CD14-positive monocyte (primary cell): ENCODE measurements at regions of chr20 and their contacts with region 1.

Region 1: DNA sequence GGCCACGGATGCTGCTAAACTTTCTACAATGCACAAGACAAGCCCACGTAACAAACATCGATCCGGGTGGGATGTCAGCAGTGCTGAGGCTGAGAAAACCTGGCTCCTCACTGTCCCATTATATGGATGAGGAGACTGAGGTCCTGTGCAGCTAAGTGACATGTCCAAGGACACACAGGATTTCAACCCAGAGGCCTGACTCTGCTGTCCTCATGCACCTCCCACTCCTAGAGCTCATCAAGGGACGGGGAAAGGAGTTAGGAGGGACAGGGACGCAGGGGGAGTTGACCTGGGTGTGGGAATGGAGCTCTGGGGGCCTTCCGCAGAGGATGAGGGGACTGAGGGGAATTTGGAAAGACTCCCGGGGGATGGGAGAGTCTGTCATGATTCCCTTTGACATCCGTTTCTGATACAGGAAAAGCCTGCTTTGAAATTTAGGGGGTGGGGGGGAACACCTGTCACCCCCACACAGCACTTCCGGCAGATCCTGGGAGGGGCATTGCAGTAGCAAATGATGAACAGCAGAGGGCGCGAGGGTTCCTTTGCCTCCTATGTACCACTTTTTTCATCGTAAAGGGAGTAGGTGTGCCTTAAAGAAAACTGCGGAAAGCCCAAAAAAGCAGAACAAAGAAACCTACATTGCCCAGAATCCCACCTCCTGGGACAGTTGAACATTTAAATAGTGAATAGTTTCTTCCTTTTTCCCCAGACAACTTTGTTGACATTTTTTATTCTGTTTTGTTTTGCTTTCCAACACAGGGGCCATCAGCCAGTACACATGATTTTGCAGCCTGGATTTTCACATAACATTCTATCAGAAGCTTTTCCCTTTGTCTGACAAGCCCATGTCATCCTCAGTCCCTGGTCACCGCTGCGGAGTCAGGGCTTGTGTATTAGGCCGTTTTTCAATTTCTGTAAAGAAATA is 48.6 kb downstream of the SLC2A10 start:
- DNase-seq: peak; percentile 14 to 47 (median 44)
- H3K4me3 ChIP-seq: no peak overlapping the region
- H3K4me3 Mint-ChIP-seq: no peak overlapping the region
- H3K27ac ChIP-seq: no peak overlapping the region
- H3K27ac Mint-ChIP-seq: no peak overlapping the region
- H3K4me1 ChIP-seq: no peaks in the 10 kb centered on the region
- H3K4me1 Mint-ChIP-seq: peaks cover 3% of the 10 kb centered on the region
- H3K27me3 ChIP-seq: no peaks in the 10 kb centered on the region
- H3K27me3 Mint-ChIP-seq: peaks cover 5 to 10% (median 5%) of the 10 kb centered on the region in 3 donors
- CTCF ChIP-seq: peak; percentile 95

Region 2: DNA sequence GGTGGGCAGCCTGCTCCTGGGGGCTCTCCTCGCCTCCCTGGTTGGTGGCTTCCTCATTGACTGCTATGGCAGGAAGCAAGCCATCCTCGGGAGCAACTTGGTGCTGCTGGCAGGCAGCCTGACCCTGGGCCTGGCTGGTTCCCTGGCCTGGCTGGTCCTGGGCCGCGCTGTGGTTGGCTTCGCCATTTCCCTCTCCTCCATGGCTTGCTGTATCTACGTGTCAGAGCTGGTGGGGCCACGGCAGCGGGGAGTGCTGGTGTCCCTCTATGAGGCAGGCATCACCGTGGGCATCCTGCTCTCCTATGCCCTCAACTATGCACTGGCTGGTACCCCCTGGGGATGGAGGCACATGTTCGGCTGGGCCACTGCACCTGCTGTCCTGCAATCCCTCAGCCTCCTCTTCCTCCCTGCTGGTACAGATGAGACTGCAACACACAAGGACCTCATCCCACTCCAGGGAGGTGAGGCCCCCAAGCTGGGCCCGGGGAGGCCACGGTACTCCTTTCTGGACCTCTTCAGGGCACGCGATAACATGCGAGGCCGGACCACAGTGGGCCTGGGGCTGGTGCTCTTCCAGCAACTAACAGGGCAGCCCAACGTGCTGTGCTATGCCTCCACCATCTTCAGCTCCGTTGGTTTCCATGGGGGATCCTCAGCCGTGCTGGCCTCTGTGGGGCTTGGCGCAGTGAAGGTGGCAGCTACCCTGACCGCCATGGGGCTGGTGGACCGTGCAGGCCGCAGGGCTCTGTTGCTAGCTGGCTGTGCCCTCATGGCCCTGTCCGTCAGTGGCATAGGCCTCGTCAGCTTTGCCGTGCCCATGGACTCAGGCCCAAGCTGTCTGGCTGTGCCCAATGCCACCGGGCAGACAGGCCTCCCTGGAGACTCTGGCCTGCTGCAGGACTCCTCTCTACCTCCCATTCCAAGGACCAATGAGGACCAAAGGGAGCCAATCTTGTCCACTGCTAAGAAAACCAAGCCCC is 32.5 kb before region 1 on chr20:
- intact Hi-C with region 1: no loop called
- DNase-seq: no peak
- H3K4me3 ChIP-seq: no peak overlapping the region
- H3K4me3 Mint-ChIP-seq: no peak overlapping the region
- H3K27ac ChIP-seq: no peak overlapping the region
- H3K27ac Mint-ChIP-seq: no peak overlapping the region
- H3K4me1 ChIP-seq: no peaks in the 10 kb centered on the region
- H3K4me1 Mint-ChIP-seq: no peaks in the 10 kb centered on the region
- H3K27me3 ChIP-seq: no peaks in the 10 kb centered on the region
- H3K27me3 Mint-ChIP-seq: peaks cover 0 to 5% (median 0%) of the 10 kb centered on the region in 3 donors
- CTCF ChIP-seq: no peak

Region 3: DNA sequence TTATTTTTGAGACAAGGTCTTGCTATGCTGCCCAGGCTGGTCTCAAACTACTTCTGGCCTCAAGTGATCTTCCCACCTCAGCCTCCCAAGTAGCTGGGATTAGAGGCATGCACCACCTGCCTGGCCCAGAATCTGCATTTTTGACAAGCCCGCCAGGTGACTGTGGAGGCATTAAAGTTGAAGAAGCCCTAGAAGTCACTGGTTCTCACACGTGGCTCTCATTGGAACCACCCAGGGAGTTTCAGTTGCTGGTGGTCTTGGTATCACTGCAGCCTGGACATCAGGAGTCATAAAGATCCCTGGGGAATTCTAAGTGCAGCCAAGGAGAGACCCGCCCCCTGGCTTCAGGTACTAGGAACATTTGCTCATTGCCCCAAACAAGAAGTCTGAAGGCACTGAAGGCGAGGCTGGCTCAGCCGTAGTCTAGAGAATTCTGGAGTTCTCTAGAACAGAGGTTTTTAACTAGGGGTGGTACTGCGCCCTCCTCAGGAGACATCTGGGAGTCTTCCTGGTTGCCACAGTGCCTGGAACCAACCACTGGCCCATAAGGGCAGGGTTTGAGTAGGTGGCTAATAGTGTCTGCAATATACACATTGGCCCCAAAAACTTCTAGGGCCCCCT is 415.7 kb after region 1 on chr20:
- intact Hi-C with region 1: loop called in 1 of 2 experiments (anchors 10 kb)
- DNase-seq: no peak
- H3K4me3 ChIP-seq: no peak overlapping the region
- H3K4me3 Mint-ChIP-seq: no peak overlapping the region
- H3K27ac ChIP-seq: no peak overlapping the region
- H3K27ac Mint-ChIP-seq: no peak overlapping the region
- H3K4me1 ChIP-seq: no peaks in the 10 kb centered on the region
- H3K4me1 Mint-ChIP-seq: no peaks in the 10 kb centered on the region
- H3K27me3 ChIP-seq: no peaks in the 10 kb centered on the region
- H3K27me3 Mint-ChIP-seq: peaks cover 8 to 38% (median 18%) of the 10 kb centered on the region in 3 donors
- CTCF ChIP-seq: peak; percentile 17